Stomach (tissue), 19 donors: ENCODE measurements at regions of chr10 and their contacts with region 1.

Region 1: GRCh38 chr10:67884842-67885680 is 605 bp downstream of the SIRT1 start:
- DNase-seq: peak; percentile 84 to 94
- H3K4me3 ChIP-seq: peak overlapping the region; percentile 70 to 86 (median 76)
- H3K27ac ChIP-seq: peak overlapping the region; percentile 93 to 100 (median 98)
- H3K4me1 ChIP-seq: peaks cover 13 to 50% (median 33%) of the 10 kb centered on the region in 4 donors
- H3K27me3 ChIP-seq: no peaks in the 10 kb centered on the region
- CTCF ChIP-seq: no peak
- EP300 ChIP-seq: no peak
- POLR2A ChIP-seq: peak in 1 of 4 donors; percentile 37

Region 2: DNA sequence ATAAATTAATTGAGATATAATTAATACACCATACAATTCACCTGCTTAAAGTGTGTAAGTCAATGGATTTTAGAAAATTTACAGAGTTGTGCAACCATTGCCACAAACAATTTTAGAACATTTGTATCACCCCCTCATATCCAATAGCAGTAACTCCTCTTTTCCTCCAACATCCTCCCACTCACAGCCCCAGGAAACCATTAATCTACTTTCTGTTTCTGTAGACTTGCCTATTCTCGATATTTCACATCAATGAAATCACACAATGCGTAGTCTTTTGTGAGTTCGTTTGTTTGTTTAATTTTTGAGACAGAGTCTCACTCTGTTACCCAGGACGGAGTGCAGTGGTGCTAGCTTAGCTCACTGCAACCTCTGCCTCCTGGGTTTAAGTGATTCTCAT is 203.7 kb after region 1 on chr10:
- intact Hi-C with region 1: loop called (anchors 5 kb)
- DNase-seq: no peak
- H3K4me3 ChIP-seq: no peak overlapping the region
- H3K27ac ChIP-seq: no peak overlapping the region
- H3K4me1 ChIP-seq: peaks cover 0 to 2% (median 0%) of the 10 kb centered on the region in 4 donors
- H3K27me3 ChIP-seq: no peaks in the 10 kb centered on the region
- CTCF ChIP-seq: no peak
- EP300 ChIP-seq: no peak
- POLR2A ChIP-seq: no peak